Activated CD8-positive, alpha-beta memory T cell treated with anti-CD3 and anti-CD28 coated beads, Interleukin-2, amount 10 ng/mL, durations not matched to agents 7 days and 5 days (primary cell): ENCODE measurements at regions of chr18 and their contacts with region 1.

Region 1: GRCh38 chr18:62425465-62426195 is 97.2 kb upstream of the ZCCHC2 start:
- DNase-seq: peak; percentile 75
- ATAC-seq: peak; percentile 50
- H3K4me3 Mint-ChIP-seq: no peak overlapping the region
- H3K27ac Mint-ChIP-seq: peak overlapping the region; percentile 2
- H3K4me1 Mint-ChIP-seq: peaks cover 47% of the 10 kb centered on the region
- H3K27me3 Mint-ChIP-seq: peaks cover 2% of the 10 kb centered on the region

Region 2: GRCh38 chr18:62324917-62325805 is 100.5 kb before region 1 on chr18 and contains the start of gene TNFRSF11A:
- CTCF ChIA-PET with region 1: interaction called, 25 read pairs
- DNase-seq: peak; percentile 72
- ATAC-seq: peak; percentile 84
- H3K4me3 Mint-ChIP-seq: peak within 1 kb of the TSS; percentile 79
- H3K27ac Mint-ChIP-seq: peak within 1 kb of the TSS; percentile 33
- H3K4me1 Mint-ChIP-seq: peaks cover 49% of the 10 kb centered on the region
- H3K27me3 Mint-ChIP-seq: peaks cover 57% of the 10 kb centered on the region
- total RNA-seq, gene TNFRSF11A: 8.0 to 9.7 TPM

Region 3: GRCh38 chr18:62413206-62413605 is 12.4 kb before region 1 on chr18:
- CTCF ChIA-PET with region 1: interaction called, 10 read pairs
- DNase-seq: no peak
- ATAC-seq: no peak
- H3K4me3 Mint-ChIP-seq: no peak overlapping the region
- H3K27ac Mint-ChIP-seq: no peak overlapping the region
- H3K4me1 Mint-ChIP-seq: peaks cover 11% of the 10 kb centered on the region
- H3K27me3 Mint-ChIP-seq: peaks cover 15% of the 10 kb centered on the region

Region 4: GRCh38 chr18:62437235-62438017 is 11.8 kb after region 1 on chr18:
- CTCF ChIA-PET with region 1: interaction called, 13 read pairs
- DNase-seq: no peak
- ATAC-seq: no peak
- H3K4me3 Mint-ChIP-seq: no peak overlapping the region
- H3K27ac Mint-ChIP-seq: no peak overlapping the region
- H3K4me1 Mint-ChIP-seq: no peaks in the 10 kb centered on the region
- H3K27me3 Mint-ChIP-seq: peaks cover 17% of the 10 kb centered on the region

Region 5: GRCh38 chr18:62505669-62506494 is 80.3 kb after region 1 on chr18:
- CTCF ChIA-PET with region 1: interaction called, 10 read pairs
- DNase-seq: peak; percentile 70
- ATAC-seq: peak; percentile 87
- H3K4me3 Mint-ChIP-seq: peak overlapping the region; percentile 63
- H3K27ac Mint-ChIP-seq: peak overlapping the region; percentile 100
- H3K4me1 Mint-ChIP-seq: peaks cover 30% of the 10 kb centered on the region
- H3K27me3 Mint-ChIP-seq: no peaks in the 10 kb centered on the region

Region 6: GRCh38 chr18:62584241-62585120 is 158.9 kb after region 1 on chr18:
- CTCF ChIA-PET with region 1: interaction called, 50 read pairs
- DNase-seq: peak; percentile 92
- ATAC-seq: peak; percentile 83
- H3K4me3 Mint-ChIP-seq: peak overlapping the region; percentile 9
- H3K27ac Mint-ChIP-seq: peak overlapping the region; percentile 96
- H3K4me1 Mint-ChIP-seq: peaks cover 56% of the 10 kb centered on the region
- H3K27me3 Mint-ChIP-seq: no peaks in the 10 kb centered on the region